CD14-positive monocyte (primary cell): ENCODE measurements at regions of chr17 and their contacts with region 1.

Region 1: GRCh38 chr17:73533781-73534180 is 110.5 kb downstream of the SDK2 start:
- DNase-seq: no peak
- H3K4me3 ChIP-seq: no peak overlapping the region
- H3K4me3 Mint-ChIP-seq: no peak overlapping the region
- H3K27ac ChIP-seq: no peak overlapping the region
- H3K27ac Mint-ChIP-seq: no peak overlapping the region
- H3K4me1 ChIP-seq: no peaks in the 10 kb centered on the region
- H3K4me1 Mint-ChIP-seq: no peaks in the 10 kb centered on the region
- H3K27me3 ChIP-seq: no peaks in the 10 kb centered on the region
- H3K27me3 Mint-ChIP-seq: peaks cover 0 to 4% (median 0%) of the 10 kb centered on the region in 3 donors
- CTCF ChIP-seq: no peak

Region 2: GRCh38 chr17:73511719-73512115 is 22.1 kb before region 1 on chr17:
- intact Hi-C with region 1: loop called in 1 of 2 experiments (anchors 1 kb)
- DNase-seq: no peak
- H3K4me3 ChIP-seq: no peak overlapping the region
- H3K4me3 Mint-ChIP-seq: no peak overlapping the region
- H3K27ac ChIP-seq: no peak overlapping the region
- H3K27ac Mint-ChIP-seq: no peak overlapping the region
- H3K4me1 ChIP-seq: no peaks in the 10 kb centered on the region
- H3K4me1 Mint-ChIP-seq: no peaks in the 10 kb centered on the region
- H3K27me3 ChIP-seq: no peaks in the 10 kb centered on the region
- H3K27me3 Mint-ChIP-seq: peaks cover 0 to 2% (median 1%) of the 10 kb centered on the region in 3 donors
- CTCF ChIP-seq: no peak